CD4-positive, alpha-beta T cell (primary cell): ENCODE measurements at regions of chr2 and their contacts with region 1.

Region 1: DNA sequence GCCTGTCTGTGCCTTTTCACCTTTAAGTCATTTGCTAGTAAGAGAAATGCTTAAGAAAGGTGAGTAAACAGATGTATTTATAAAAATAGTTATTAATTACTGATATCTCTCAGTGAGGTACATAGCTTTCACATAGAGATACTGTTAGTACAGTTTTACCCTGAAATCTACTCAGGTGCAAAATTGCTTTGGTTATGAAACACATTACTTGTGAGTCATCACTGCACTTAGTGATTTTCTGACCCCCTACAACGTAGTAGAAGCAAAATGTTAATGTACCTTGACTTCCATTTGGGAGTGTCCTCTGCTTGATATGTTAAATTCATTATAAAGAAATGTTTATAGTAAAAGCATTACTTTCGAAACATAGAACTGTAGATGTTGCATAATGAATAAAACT is 6.5 kb downstream of the GLS start:
- DNase-seq: peak in 1 of 14 experiments; percentile 29
- ATAC-seq: no peak
- H3K4me3 ChIP-seq: no peak overlapping the region
- H3K4me3 Mint-ChIP-seq: no peak overlapping the region
- H3K27ac ChIP-seq: no peak overlapping the region
- H3K27ac Mint-ChIP-seq: peak overlapping the region; percentile 53
- H3K4me1 ChIP-seq: peaks cover 22% of the 10 kb centered on the region
- H3K4me1 Mint-ChIP-seq: peaks cover 77% of the 10 kb centered on the region
- H3K27me3 ChIP-seq: no peaks in the 10 kb centered on the region
- H3K27me3 Mint-ChIP-seq: no peaks in the 10 kb centered on the region
- CTCF ChIP-seq: no peak

Region 2: GRCh38 chr2:190641469-190641868 is 245.6 kb before region 1 on chr2:
- CTCF ChIA-PET with region 1: no interaction called
- POLR2A ChIA-PET with region 1: no interaction called
- intact Hi-C with region 1: loop called in 1 of 2 experiments (anchors 5 kb)
- DNase-seq: no peak
- ATAC-seq: no peak
- H3K4me3 ChIP-seq: no peak overlapping the region
- H3K4me3 Mint-ChIP-seq: no peak overlapping the region
- H3K27ac ChIP-seq: no peak overlapping the region
- H3K27ac Mint-ChIP-seq: no peak overlapping the region
- H3K4me1 ChIP-seq: no peaks in the 10 kb centered on the region
- H3K4me1 Mint-ChIP-seq: peaks cover 17% of the 10 kb centered on the region
- H3K27me3 ChIP-seq: no peaks in the 10 kb centered on the region
- H3K27me3 Mint-ChIP-seq: no peaks in the 10 kb centered on the region
- CTCF ChIP-seq: no peak

Region 3: GRCh38 chr2:190698895-190699294 is 188.2 kb before region 1 on chr2:
- CTCF ChIA-PET with region 1: no interaction called
- POLR2A ChIA-PET with region 1: no interaction called
- intact Hi-C with region 1: no loop called
- DNase-seq: no peak
- ATAC-seq: no peak
- H3K4me3 ChIP-seq: no peak overlapping the region
- H3K4me3 Mint-ChIP-seq: no peak overlapping the region
- H3K27ac ChIP-seq: no peak overlapping the region
- H3K27ac Mint-ChIP-seq: no peak overlapping the region
- H3K4me1 ChIP-seq: no peaks in the 10 kb centered on the region
- H3K4me1 Mint-ChIP-seq: no peaks in the 10 kb centered on the region
- H3K27me3 ChIP-seq: no peaks in the 10 kb centered on the region
- H3K27me3 Mint-ChIP-seq: no peaks in the 10 kb centered on the region
- CTCF ChIP-seq: no peak

Region 4: GRCh38 chr2:190765386-190766173 is 121.5 kb before region 1 on chr2:
- CTCF ChIA-PET with region 1: no interaction called
- POLR2A ChIA-PET with region 1: no interaction called
- intact Hi-C with region 1: no loop called
- DNase-seq: no peak
- ATAC-seq: no peak
- H3K4me3 ChIP-seq: no peak overlapping the region
- H3K4me3 Mint-ChIP-seq: no peak overlapping the region
- H3K27ac ChIP-seq: no peak overlapping the region
- H3K27ac Mint-ChIP-seq: no peak overlapping the region
- H3K4me1 ChIP-seq: no peaks in the 10 kb centered on the region
- H3K4me1 Mint-ChIP-seq: peaks cover 5% of the 10 kb centered on the region
- H3K27me3 ChIP-seq: no peaks in the 10 kb centered on the region
- H3K27me3 Mint-ChIP-seq: no peaks in the 10 kb centered on the region
- CTCF ChIP-seq: no peak

Region 5: DNA sequence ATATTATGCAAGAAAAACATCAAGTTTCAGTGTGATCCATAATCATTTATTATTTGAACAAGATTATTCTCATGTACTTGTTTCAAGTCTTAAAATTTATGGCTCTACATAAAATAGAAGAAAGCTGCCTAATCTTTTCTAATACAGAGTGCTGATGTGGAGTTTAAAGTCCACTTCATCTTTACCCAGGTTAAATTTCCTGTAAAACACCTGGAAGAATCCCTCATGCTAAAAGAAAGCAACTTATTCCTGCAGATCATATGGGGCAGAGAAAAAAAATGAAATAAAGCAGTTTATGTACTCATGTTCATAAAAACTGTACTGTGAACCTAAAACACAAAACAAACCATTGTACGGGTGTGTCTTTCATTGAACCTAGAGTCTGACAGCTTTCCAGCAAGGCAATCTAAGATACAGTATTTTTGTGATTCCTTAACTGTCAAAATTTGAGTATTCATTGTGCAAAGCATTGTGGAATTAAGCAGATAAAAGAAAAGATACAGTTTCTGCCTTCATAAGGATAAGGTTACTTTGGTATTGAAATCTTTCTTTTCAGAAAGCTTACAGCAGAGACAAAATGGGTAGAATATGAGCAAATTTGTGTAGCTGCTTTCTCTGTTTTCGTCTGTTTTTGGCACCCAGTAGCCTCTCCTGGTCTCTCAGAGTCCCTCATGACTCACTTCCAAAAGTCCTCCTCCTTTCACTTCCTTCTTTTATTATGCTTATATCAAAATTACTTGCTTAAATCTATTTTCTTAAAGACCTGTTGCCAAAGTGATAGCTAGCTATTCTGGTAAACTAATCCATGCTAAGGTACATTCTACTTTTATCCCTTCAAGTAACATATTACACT is 33.3 kb before region 1 on chr2:
- CTCF ChIA-PET with region 1: interaction called, 21 read pairs
- POLR2A ChIA-PET with region 1: interaction called, 41 read pairs
- intact Hi-C with region 1: no loop called
- DNase-seq: peak in 2 of 14 experiments; percentile 15
- ATAC-seq: no peak
- H3K4me3 ChIP-seq: no peak overlapping the region
- H3K4me3 Mint-ChIP-seq: no peak overlapping the region
- H3K27ac ChIP-seq: no peak overlapping the region
- H3K27ac Mint-ChIP-seq: no peak overlapping the region
- H3K4me1 ChIP-seq: peaks cover 3% of the 10 kb centered on the region
- H3K4me1 Mint-ChIP-seq: no peaks in the 10 kb centered on the region
- H3K27me3 ChIP-seq: no peaks in the 10 kb centered on the region
- H3K27me3 Mint-ChIP-seq: no peaks in the 10 kb centered on the region
- CTCF ChIP-seq: no peak